ENCODE measurements at regions of chr2 and their contacts with region 1.

Region 1: DNA sequence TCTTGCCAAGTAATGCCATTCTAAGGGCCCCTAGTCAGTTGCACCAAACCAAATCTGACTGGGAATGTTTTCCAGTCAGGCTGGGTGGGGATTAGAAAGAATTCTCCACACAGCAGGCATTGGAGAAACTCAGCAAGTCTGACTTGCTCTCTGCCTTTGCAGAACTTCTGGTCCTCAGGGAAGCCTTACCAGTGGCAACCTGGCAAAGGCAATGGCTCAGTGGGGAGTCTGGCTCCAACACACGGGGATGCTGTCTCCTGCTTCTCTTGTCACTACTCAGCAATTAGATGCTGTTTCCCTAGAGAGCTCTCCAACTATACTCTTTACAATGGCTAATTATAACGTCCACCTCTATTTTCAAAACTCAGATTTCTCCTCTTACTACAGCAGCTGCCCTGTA is 810.7 kb downstream of the LRRTM4 start:
- DNase-seq: no peak
- H3K4me3 ChIP-seq: no peak overlapping the region
- H3K27ac ChIP-seq: no peak overlapping the region
- H3K4me1 ChIP-seq: no peaks in the 10 kb centered on the region
- H3K27me3 ChIP-seq: no peaks in the 10 kb centered on the region
- CTCF ChIP-seq: no peak
- POLR2A ChIP-seq: no peak

Region 2: GRCh38 chr2:76478266-76479035 is 233.0 kb before region 1 on chr2:
- intact Hi-C with region 1: no loop called
- DNase-seq: no peak
- H3K4me3 ChIP-seq: no peak overlapping the region
- H3K27ac ChIP-seq: no peak overlapping the region
- H3K4me1 ChIP-seq: no peaks in the 10 kb centered on the region
- H3K27me3 ChIP-seq: no peaks in the 10 kb centered on the region
- CTCF ChIP-seq: no peak
- POLR2A ChIP-seq: no peak

Region 3: GRCh38 chr2:76678383-76679024 is 33.0 kb before region 1 on chr2:
- intact Hi-C with region 1: loop called (anchors 5 kb)
- DNase-seq: no peak
- H3K4me3 ChIP-seq: no peak overlapping the region
- H3K27ac ChIP-seq: no peak overlapping the region
- H3K4me1 ChIP-seq: no peaks in the 10 kb centered on the region
- H3K27me3 ChIP-seq: no peaks in the 10 kb centered on the region
- CTCF ChIP-seq: no peak
- POLR2A ChIP-seq: no peak

Region 4: GRCh38 chr2:76731157-76731556 is 19.7 kb after region 1 on chr2:
- intact Hi-C with region 1: no loop called
- DNase-seq: no peak
- H3K4me3 ChIP-seq: no peak overlapping the region
- H3K27ac ChIP-seq: no peak overlapping the region
- H3K4me1 ChIP-seq: no peaks in the 10 kb centered on the region
- H3K27me3 ChIP-seq: no peaks in the 10 kb centered on the region
- CTCF ChIP-seq: no peak
- POLR2A ChIP-seq: no peak